B cell (primary cell): ENCODE measurements at regions of chr16 and their contacts with region 1.

Region 1: DNA sequence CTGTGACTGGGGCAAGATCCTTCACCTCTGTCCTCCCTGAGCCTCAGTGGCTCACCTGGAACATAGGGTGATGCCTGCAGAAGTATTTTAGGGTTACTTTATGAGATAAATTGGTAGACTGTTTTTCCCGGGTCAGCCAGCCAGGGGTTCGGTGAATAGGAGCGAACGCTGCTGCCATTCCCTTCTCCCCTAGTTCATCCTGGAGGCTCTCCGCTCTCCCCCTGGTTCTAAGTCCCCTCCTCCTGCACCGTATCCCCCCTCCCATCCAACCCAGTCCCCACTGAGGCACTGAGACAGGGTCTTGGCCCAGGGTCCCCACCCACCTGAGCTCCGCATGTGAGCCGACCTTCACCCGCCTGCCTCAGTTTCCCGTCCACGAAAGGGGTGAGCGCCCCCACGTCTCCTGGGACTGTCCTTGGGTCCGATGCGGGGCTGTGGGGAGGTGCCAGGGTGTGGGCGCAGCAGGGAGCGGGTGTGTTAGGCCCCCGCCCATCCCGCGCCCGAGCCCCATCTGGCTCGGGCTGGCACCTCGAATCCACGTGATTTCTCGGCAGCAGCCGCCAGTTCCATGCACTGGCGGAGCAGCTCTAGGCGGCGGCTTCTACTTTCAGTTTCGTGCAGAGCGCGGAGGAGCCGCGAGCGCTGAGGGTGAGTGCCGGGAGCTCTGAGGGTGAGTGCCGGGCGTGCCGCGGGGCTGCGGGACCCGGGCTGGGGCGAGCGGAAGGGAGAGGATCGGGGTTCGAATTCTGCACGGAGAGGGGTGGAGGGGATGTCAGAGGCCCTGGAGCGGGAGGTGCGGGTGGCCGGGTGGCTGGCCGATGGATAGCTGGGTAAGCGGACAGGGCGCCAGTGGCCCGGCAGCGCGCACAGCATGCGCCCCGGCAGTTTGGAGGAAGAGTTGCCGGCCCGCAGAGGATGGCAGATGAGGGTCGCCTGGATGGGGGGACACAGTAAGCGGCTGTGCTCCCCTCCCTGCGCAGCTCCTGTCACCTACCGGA is at the start of gene NLRC5:
- DNase-seq: peak; percentile 93
- ATAC-seq: peak; percentile 89
- H3K4me3 ChIP-seq: peak within 1 kb of the TSS; percentile 69 to 97 (median 89)
- H3K4me3 Mint-ChIP-seq: peak within 1 kb of the TSS; percentile 100
- H3K27ac ChIP-seq: peak within 1 kb of the TSS; percentile 83 to 86
- H3K27ac Mint-ChIP-seq: peak within 1 kb of the TSS; percentile 99
- H3K4me1 ChIP-seq: peaks cover 75 to 81% of the 10 kb centered on the region in 2 donors
- H3K4me1 Mint-ChIP-seq: peaks cover 86% of the 10 kb centered on the region
- H3K27me3 ChIP-seq: no peaks in the 10 kb centered on the region
- H3K27me3 Mint-ChIP-seq: no peaks in the 10 kb centered on the region
- CTCF ChIP-seq: no peak
- total RNA-seq, gene NLRC5: 510 and 531 TPM in 2 replicates

Region 2: DNA sequence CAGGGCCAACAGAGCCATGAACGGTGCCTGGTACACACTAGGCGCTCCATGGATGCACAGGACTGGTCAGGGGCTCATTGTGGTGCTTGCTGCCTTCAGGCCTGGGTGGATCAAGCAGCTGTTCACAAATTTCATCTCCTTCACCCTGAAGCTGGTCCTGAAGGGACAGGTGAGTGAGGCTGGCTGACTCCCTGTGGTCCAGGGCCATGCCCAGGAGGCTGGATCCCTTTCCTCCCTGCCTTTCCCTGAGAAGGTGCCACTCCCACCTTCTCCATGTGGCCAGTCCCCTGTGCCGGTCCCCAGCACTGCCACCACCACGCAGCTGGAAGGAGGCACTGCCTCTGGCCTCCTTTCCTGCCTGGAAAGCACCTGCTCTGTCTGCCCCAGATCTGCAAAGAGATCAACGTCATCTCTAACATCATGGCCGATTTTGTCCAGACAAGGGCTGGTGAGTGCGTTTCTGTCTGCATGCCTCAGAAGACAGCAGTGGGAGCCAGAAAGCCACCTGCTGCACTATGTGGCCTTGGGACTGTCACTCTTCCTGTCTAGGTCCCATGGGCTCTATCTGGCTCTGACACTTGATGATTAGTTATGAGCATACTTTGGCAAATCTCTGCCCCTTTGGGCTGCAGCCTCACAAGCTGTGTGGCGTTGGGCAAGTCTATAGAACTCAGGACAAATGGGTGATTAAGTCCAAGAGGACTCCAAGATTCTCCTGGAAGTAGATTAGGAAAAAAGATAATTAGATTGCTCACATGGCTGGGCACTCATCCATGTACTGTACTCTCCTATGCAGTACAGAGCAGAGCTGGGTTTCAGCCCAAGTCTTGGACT is 18.1 kb before region 1 on chr16:
- CTCF ChIA-PET with region 1: interaction called, 124 read pairs
- POLR2A ChIA-PET with region 1: interaction called, 13 read pairs
- intact Hi-C with region 1: loop called (anchors 1 kb)
- DNase-seq: peak; percentile 87
- ATAC-seq: peak; percentile 92
- H3K4me3 ChIP-seq: no peak overlapping the region
- H3K4me3 Mint-ChIP-seq: peak overlapping the region; percentile 82
- H3K27ac ChIP-seq: peak overlapping the region; percentile 39 to 57
- H3K27ac Mint-ChIP-seq: peak overlapping the region; percentile 97
- H3K4me1 ChIP-seq: peaks cover 55 to 62% of the 10 kb centered on the region in 2 donors
- H3K4me1 Mint-ChIP-seq: peaks cover 60% of the 10 kb centered on the region
- H3K27me3 ChIP-seq: no peaks in the 10 kb centered on the region
- H3K27me3 Mint-ChIP-seq: no peaks in the 10 kb centered on the region
- CTCF ChIP-seq: no peak

Region 3: GRCh38 chr16:57000271-57001025 is 11.2 kb after region 1 on chr16:
- CTCF ChIA-PET with region 1: interaction called, 6 read pairs
- POLR2A ChIA-PET with region 1: interaction called, 13 read pairs
- intact Hi-C with region 1: loop called (anchors 1 kb)
- DNase-seq: peak; percentile 41
- ATAC-seq: peak; percentile 73
- H3K4me3 ChIP-seq: no peak overlapping the region
- H3K4me3 Mint-ChIP-seq: peak overlapping the region; percentile 71
- H3K27ac ChIP-seq: peak overlapping the region; percentile 77 to 83
- H3K27ac Mint-ChIP-seq: peak overlapping the region; percentile 94
- H3K4me1 ChIP-seq: peaks cover 52 to 63% of the 10 kb centered on the region in 2 donors
- H3K4me1 Mint-ChIP-seq: peaks cover 88% of the 10 kb centered on the region
- H3K27me3 ChIP-seq: no peaks in the 10 kb centered on the region
- H3K27me3 Mint-ChIP-seq: no peaks in the 10 kb centered on the region
- CTCF ChIP-seq: no peak

Region 4: GRCh38 chr16:57020651-57021050 is 31.4 kb after region 1 on chr16:
- CTCF ChIA-PET with region 1: no interaction called
- POLR2A ChIA-PET with region 1: interaction called, 12 read pairs
- intact Hi-C with region 1: no loop called
- DNase-seq: no peak
- ATAC-seq: no peak
- H3K4me3 ChIP-seq: no peak overlapping the region
- H3K4me3 Mint-ChIP-seq: no peak overlapping the region
- H3K27ac ChIP-seq: no peak overlapping the region
- H3K27ac Mint-ChIP-seq: peak overlapping the region; percentile 43
- H3K4me1 ChIP-seq: peaks cover 0 to 27% of the 10 kb centered on the region in 2 donors
- H3K4me1 Mint-ChIP-seq: peaks cover 9% of the 10 kb centered on the region
- H3K27me3 ChIP-seq: no peaks in the 10 kb centered on the region
- H3K27me3 Mint-ChIP-seq: no peaks in the 10 kb centered on the region
- CTCF ChIP-seq: no peak